ENCODE measurements at regions of chr1 and their contacts with region 1.

Region 1: DNA sequence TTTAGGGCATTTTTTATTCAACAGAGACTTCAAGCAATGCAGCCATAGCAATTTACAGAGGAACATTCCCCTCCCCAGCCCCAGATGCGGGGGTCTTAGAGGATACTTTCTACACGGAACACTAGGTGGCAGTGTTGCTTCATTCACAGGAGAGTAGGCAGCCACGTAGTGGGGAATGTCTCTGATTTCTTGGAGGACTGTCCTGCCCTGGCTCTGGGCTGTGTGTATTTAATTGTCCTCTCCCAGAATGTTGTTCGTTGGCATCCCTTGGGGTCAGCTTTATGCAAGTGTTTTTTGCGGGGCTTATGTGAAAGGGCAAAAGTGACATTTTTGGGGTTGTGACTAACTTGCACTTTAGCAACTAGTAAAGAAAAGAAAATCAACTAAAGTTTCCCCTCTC is 96.9 kb downstream of the PAPPA2 start:
- DNase-seq: peak; percentile 48 to 60
- H3K4me3 ChIP-seq: no peak overlapping the region
- H3K4me3 Mint-ChIP-seq: no peak overlapping the region
- H3K27ac Mint-ChIP-seq: no peak overlapping the region
- H3K4me1 ChIP-seq: no peaks in the 10 kb centered on the region
- H3K4me1 Mint-ChIP-seq: no peaks in the 10 kb centered on the region
- H3K27me3 ChIP-seq: no peaks in the 10 kb centered on the region
- H3K27me3 Mint-ChIP-seq: peaks cover 16% of the 10 kb centered on the region
- CTCF ChIP-seq: peak; percentile 83 to 85

Region 2: GRCh38 chr1:176691251-176692228 is 131.7 kb after region 1 on chr1:
- CTCF ChIA-PET with region 1: interaction called, 8 read pairs
- POLR2A ChIA-PET with region 1: no interaction called
- intact Hi-C with region 1: loop called (anchors 1 kb)
- DNase-seq: peak; percentile 56 to 61
- H3K4me3 ChIP-seq: no peak overlapping the region
- H3K4me3 Mint-ChIP-seq: no peak overlapping the region
- H3K27ac Mint-ChIP-seq: no peak overlapping the region
- H3K4me1 ChIP-seq: no peaks in the 10 kb centered on the region
- H3K4me1 Mint-ChIP-seq: no peaks in the 10 kb centered on the region
- H3K27me3 ChIP-seq: no peaks in the 10 kb centered on the region
- H3K27me3 Mint-ChIP-seq: peaks cover 16% of the 10 kb centered on the region
- CTCF ChIP-seq: peak; percentile 71 to 76

Region 3: DNA sequence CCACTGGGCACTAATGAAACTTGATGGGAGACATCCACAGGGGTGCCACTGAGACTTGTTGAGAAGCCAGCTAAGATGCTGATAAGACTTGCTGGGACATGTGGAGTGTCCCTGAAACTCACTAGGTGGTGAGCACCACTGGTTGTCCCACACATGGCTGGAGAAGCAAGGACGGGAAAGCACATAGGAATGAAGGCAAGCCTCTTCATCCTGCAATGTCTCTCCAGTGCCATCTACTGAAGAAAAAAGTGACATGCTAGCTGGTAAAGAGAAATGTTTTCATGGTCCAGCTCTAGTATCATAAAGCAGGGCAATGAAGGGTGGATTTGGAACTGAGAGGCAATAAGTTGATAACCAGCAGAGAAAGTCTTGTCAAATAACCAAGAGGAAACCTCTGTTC is 186.1 kb after region 1 on chr1:
- CTCF ChIA-PET with region 1: no interaction called
- POLR2A ChIA-PET with region 1: no interaction called
- intact Hi-C with region 1: loop called (anchors 1 kb)
- DNase-seq: peak in 1 of 2 experiments; percentile 9
- H3K4me3 ChIP-seq: no peak overlapping the region
- H3K4me3 Mint-ChIP-seq: no peak overlapping the region
- H3K27ac Mint-ChIP-seq: no peak overlapping the region
- H3K4me1 ChIP-seq: no peaks in the 10 kb centered on the region
- H3K4me1 Mint-ChIP-seq: no peaks in the 10 kb centered on the region
- H3K27me3 ChIP-seq: no peaks in the 10 kb centered on the region
- H3K27me3 Mint-ChIP-seq: peaks cover 3% of the 10 kb centered on the region
- CTCF ChIP-seq: peak in 1 of 2 experiments; percentile 19

Region 4: DNA sequence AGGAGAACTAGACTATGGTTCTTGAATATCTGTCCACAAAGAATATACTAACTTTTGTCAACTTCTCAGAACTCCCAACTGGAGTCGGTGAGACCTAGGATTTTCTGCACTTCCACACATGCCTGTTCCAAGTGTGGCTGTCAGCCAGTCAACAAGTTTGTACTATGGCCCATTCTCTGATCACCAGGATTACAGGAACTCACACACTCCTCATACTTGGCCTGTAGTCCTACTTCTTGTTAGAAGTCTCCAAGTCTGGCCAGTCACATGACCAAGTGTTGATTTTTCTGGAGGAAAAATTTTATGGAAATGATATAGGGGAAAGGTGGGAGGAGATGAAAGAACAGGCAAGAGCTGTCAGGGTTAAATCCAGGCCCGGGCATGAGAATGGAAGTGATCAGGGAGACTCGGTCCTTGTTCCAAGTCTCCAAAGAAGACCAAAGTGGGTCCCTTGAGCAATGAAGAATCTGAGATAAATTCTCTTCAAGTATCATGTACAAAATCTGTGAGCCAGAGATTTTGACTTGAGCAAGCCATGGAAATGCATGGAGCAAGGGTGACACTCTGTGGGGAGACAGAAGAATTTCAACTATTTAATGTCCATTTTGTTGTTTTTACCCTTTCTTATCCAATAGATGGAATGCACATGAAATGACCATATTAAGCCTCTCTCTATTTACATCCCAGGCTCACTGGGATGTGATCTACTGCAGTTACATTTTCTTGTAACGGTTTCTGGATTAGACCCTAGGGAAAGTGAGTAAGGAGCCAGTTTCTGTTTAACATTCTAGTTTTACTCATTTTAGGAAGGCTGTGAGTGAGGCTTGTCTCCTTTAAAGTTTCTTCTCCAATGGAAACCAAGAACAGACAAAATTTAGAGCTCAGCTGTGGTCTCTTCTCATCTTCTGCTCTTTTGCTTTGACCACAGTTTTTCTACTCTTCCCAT is 283.7 kb after region 1 on chr1:
- CTCF ChIA-PET with region 1: no interaction called
- POLR2A ChIA-PET with region 1: no interaction called
- intact Hi-C with region 1: loop called (anchors 1 kb)
- DNase-seq: peak in 1 of 2 experiments; percentile 44
- H3K4me3 ChIP-seq: no peak overlapping the region
- H3K4me3 Mint-ChIP-seq: no peak overlapping the region
- H3K27ac Mint-ChIP-seq: no peak overlapping the region
- H3K4me1 ChIP-seq: no peaks in the 10 kb centered on the region
- H3K4me1 Mint-ChIP-seq: no peaks in the 10 kb centered on the region
- H3K27me3 ChIP-seq: no peaks in the 10 kb centered on the region
- H3K27me3 Mint-ChIP-seq: peaks cover 15% of the 10 kb centered on the region
- CTCF ChIP-seq: peak; percentile 43 to 51

Region 5: GRCh38 chr1:176880954-176881595 is 321.2 kb after region 1 on chr1:
- CTCF ChIA-PET with region 1: no interaction called
- POLR2A ChIA-PET with region 1: no interaction called
- intact Hi-C with region 1: loop called (anchors 1 kb)
- DNase-seq: peak; percentile 72 to 75
- H3K4me3 ChIP-seq: no peak overlapping the region
- H3K4me3 Mint-ChIP-seq: no peak overlapping the region
- H3K27ac Mint-ChIP-seq: no peak overlapping the region
- H3K4me1 ChIP-seq: no peaks in the 10 kb centered on the region
- H3K4me1 Mint-ChIP-seq: no peaks in the 10 kb centered on the region
- H3K27me3 ChIP-seq: no peaks in the 10 kb centered on the region
- H3K27me3 Mint-ChIP-seq: peaks cover 18% of the 10 kb centered on the region
- CTCF ChIP-seq: peak; percentile 78 to 83